Activated T-helper 2 cell treated with anti-CD3 and anti-CD28 coated beads, Interferon-gamma antibody, Interleukin-2, Interleukin-4, amounts not matched to agents 10 μg/mL and 5 μg/mL and 100 μg/mL, durations not matched to agents 14 hours and 24 hours and 36 hours (primary cell): ENCODE measurements at regions of chr7 and their contacts with region 1.

Region 1: GRCh38 chr7:19708397-19709248 is at the start of gene POLR1F:
- DNase-seq: peak; percentile 93
- H3K4me3 Mint-ChIP-seq: peak within 1 kb of the TSS; percentile 93
- H3K27ac Mint-ChIP-seq: peak within 1 kb of the TSS; percentile 88
- H3K4me1 Mint-ChIP-seq: peaks cover 39% of the 10 kb centered on the region
- H3K27me3 Mint-ChIP-seq: peaks cover 8% of the 10 kb centered on the region
- total RNA-seq, gene POLR1F: 32.5 and 41.1 TPM in 2 replicates

Region 2: DNA sequence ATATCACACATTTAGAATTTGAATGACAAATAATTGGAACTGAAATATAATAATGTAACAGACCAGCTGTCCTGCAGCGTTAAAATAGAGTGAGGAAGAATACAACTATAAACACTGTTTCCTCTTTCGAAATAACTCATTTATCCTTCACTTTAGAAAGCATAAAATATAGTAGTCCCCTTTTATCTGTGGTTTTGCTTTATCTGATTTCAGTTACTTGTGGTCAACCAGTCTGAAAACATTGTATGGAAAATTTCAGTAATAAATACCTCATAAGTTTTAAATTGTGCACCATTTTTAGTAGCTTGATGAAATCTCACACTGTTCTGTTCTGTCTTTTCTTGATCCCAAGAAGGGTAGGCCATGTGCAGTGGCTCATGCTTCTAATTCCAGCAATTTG is 31.4 kb before region 1 on chr7:
- intact Hi-C with region 1: loop called (anchors 2 kb)
- DNase-seq: no peak
- H3K4me3 Mint-ChIP-seq: no peak overlapping the region
- H3K27ac Mint-ChIP-seq: peak overlapping the region; percentile 72
- H3K4me1 Mint-ChIP-seq: peaks cover 21% of the 10 kb centered on the region
- H3K27me3 Mint-ChIP-seq: peaks cover 10% of the 10 kb centered on the region

Region 3: DNA sequence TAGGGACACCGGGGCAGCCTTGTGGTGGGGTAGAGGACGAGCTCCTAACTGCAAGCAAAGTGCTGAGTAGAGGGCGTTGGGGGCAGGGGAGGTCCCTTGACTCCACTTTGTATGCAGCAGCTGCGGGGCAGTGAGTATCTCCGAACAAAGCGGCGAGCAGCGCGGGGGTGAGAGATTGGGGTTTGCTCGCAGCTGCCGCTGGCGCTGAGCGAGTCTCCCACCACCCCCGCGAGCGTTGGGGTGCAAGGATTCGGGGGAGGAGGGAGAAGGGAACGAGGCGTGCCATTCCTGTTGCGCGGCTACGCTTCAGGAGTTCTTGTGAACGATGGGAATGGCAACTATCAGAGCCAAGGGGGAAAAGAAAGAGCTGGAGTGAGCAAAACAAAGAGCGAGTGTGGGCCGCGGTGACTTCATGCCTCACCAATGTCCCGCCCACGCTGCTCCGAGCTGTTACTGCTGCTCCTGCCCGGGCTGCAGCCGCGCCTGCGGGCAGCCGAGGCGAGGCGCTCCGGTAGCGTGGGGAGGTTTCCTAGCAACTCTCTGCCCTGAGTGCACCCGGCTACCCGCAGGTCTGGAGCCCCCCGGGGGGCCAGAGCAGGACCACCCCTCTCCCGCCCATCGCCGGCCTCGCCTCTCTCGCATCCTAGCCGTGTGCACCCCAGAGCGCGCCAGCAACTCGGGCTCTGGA is 621.8 kb after region 1 on chr7 and contains the start of gene ITGB8:
- intact Hi-C with region 1: loop called (anchors 10 kb)
- DNase-seq: peak; percentile 23
- H3K4me3 Mint-ChIP-seq: peak within 1 kb of the TSS; percentile 77
- H3K27ac Mint-ChIP-seq: peak within 1 kb of the TSS; percentile 28
- H3K4me1 Mint-ChIP-seq: peaks cover 20% of the 10 kb centered on the region
- H3K27me3 Mint-ChIP-seq: peaks cover 63% of the 10 kb centered on the region
- total RNA-seq, gene ITGB8: 0.05 TPM in 1 of 2 replicates, not detected in the other

Region 4: GRCh38 chr7:20598459-20599309 is 890.1 kb after region 1 on chr7:
- intact Hi-C with region 1: loop called (anchors 1 kb)
- DNase-seq: no peak
- H3K4me3 Mint-ChIP-seq: no peak overlapping the region
- H3K27ac Mint-ChIP-seq: no peak overlapping the region
- H3K4me1 Mint-ChIP-seq: peaks cover 2% of the 10 kb centered on the region
- H3K27me3 Mint-ChIP-seq: no peaks in the 10 kb centered on the region